IMR-90 (cell line): ENCODE measurements at regions of chr5 and their contacts with region 1.

Region 1: DNA sequence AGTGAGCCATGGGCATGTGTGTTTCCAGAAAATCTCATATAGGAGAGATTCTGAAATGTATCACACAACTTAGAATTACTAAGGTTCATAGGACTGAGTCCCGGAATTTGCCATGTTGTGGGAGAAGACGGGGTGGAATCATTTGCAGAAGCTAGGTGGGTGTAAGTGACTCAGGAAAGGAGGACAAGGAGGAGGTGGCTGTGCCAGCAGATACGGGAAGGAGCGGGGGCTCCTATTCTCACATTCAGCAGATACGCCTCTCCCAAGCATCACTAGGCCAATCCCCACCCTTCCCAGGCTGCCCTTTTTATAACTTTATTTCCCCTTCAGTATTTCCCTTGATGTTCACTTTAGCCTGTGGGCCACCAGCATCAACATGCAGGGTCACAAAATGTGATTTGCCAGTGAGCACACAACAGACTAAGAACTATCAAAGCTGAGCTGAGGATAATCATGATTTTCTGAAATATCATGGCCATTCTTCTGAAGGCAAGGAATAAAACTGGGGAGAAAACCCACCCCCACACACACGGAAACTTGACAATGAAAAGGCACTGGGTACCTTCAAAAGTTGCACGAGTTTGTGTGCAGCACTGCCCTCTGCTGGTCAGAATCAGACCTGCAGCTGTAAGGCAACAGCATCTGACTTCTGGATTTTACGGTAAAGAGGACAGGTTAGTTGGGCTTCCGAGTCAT is 133.2 kb downstream of the MTX3 start:
- DNase-seq: peak; percentile 55
- ATAC-seq: peak; percentile 75
- H3K4me3 ChIP-seq: no peak overlapping the region
- H3K27ac ChIP-seq: no peak overlapping the region
- H3K4me1 ChIP-seq: no peaks in the 10 kb centered on the region
- H3K27me3 ChIP-seq: peaks cover 9% of the 10 kb centered on the region
- CTCF ChIP-seq: peak; percentile 86
- POLR2A ChIP-seq: no peak
- RAD21 ChIP-seq: peak; percentile 84

Region 2: DNA sequence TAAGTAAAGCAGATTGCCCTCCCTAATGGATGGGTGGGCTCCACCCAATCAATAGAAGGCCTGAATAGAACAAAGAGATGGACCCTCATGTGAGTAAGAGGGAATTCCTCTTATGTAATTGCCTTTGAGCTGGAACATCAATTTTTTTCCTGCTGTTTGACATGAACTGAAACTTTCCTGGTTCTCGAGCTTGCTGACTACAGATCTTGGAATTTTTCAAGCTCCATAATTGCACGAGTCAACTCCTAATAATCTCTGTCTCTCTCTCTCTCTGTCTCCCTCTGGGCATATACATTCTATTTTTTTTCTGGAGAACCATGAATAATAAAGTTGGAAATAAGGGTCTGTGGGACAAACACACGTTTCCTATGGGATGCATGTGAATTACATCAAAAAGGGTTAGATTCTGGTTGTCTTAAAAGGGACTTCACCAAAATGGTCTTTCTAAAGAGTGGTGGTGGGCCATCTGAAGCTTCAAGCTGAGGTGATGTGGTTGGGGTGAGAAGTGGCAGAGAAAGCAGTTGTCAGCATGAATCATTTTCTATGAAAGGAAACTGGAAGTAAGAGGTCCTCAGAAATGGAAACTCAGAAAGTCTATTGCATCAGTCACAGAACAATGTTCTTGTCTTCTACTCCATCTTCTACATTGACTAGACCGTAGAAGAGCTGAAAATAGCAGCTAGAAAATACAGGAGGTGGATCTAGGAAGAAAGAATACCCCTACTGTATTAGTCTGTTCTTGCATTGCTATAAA is 296.9 kb before region 1 on chr5:
- CTCF ChIA-PET with region 1: interaction called, 4 read pairs
- POLR2A ChIA-PET with region 1: no interaction called
- dilution Hi-C with region 1: no loop called
- in situ Hi-C with region 1: loop called (anchors 10 kb)
- intact Hi-C with region 1: no loop called
- DNase-seq: peak; percentile 67
- ATAC-seq: peak; percentile 66
- H3K4me3 ChIP-seq: no peak overlapping the region
- H3K27ac ChIP-seq: peak overlapping the region; percentile 49; the same call in 1 of the 2 replicates
- H3K4me1 ChIP-seq: peaks cover 4% of the 10 kb centered on the region
- H3K27me3 ChIP-seq: no peaks in the 10 kb centered on the region
- CTCF ChIP-seq: no peak
- POLR2A ChIP-seq: no peak
- RAD21 ChIP-seq: no peak

Region 3: GRCh38 chr5:79576606-79577289 is 281.1 kb before region 1 on chr5:
- CTCF ChIA-PET with region 1: no interaction called
- POLR2A ChIA-PET with region 1: no interaction called
- dilution Hi-C with region 1: no loop called
- in situ Hi-C with region 1: no loop called
- intact Hi-C with region 1: no loop called
- DNase-seq: no peak
- ATAC-seq: no peak
- H3K4me3 ChIP-seq: no peak overlapping the region
- H3K27ac ChIP-seq: no peak overlapping the region
- H3K4me1 ChIP-seq: peaks cover 2% of the 10 kb centered on the region; the same call in 1 of the 2 replicates
- H3K27me3 ChIP-seq: no peaks in the 10 kb centered on the region; the same call in 1 of the 2 replicates
- CTCF ChIP-seq: no peak
- POLR2A ChIP-seq: no peak
- RAD21 ChIP-seq: no peak

Region 4: DNA sequence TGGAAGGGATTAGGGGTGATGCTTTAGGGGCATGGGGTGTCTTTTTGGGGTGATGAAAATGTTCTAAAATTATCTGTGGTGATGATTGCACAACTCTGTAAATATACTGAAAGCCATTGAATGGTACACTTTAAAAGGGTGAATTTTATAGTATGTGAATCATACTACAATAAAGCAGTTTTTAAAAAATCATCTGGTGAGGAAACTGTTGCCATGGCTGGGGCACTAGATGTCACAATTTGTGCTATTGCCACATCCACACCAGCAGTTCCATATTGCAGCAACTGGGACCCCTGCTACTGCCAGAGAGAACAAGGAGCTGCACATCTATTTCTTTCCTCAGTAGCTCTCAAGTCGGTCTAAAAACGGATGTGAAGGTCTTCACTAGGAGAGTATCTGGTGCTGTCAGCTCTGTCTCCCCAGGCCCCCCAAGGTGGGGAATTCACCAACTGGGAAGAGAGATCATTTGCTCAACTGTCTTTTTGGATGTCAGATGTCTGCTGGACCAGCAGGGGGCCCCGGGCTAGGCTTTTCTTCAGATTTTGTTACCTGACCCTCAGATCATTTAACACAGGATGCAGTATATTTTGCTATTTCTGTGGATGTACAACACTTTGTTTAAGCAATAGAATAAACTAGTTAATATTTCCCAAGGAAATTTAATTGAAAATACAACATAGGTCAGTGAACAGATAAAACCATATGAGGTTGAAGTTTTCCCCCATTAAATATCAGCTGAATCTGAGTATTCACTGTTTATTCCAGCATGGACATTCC is 155.1 kb before region 1 on chr5:
- CTCF ChIA-PET with region 1: no interaction called
- POLR2A ChIA-PET with region 1: no interaction called
- dilution Hi-C with region 1: no loop called
- in situ Hi-C with region 1: no loop called
- intact Hi-C with region 1: loop called (anchors 2 kb)
- DNase-seq: no peak
- ATAC-seq: peak; percentile 42
- H3K4me3 ChIP-seq: no peak overlapping the region
- H3K27ac ChIP-seq: no peak overlapping the region
- H3K4me1 ChIP-seq: peaks cover 2% of the 10 kb centered on the region; the same call in 1 of the 2 replicates
- H3K27me3 ChIP-seq: no peaks in the 10 kb centered on the region
- CTCF ChIP-seq: peak; percentile 49
- POLR2A ChIP-seq: no peak
- RAD21 ChIP-seq: peak; percentile 38